Caco-2 (cell line): ENCODE measurements at regions of chr3 and their contacts with region 1.

Region 1: GRCh38 chr3:123328851-123329635 is 119.8 kb downstream of the ADCY5 start:
- DNase-seq: peak; percentile 65 to 85
- H3K4me3 ChIP-seq: no peak overlapping the region
- H3K4me3 Mint-ChIP-seq: no peak overlapping the region
- H3K27ac Mint-ChIP-seq: no peak overlapping the region
- H3K4me1 ChIP-seq: no peaks in the 10 kb centered on the region; the same call in 1 of the 2 replicates
- H3K4me1 Mint-ChIP-seq: no peaks in the 10 kb centered on the region
- H3K27me3 ChIP-seq: no peaks in the 10 kb centered on the region
- H3K27me3 Mint-ChIP-seq: peaks cover 3% of the 10 kb centered on the region
- CTCF ChIP-seq: peak; percentile 84 to 88

Region 2: DNA sequence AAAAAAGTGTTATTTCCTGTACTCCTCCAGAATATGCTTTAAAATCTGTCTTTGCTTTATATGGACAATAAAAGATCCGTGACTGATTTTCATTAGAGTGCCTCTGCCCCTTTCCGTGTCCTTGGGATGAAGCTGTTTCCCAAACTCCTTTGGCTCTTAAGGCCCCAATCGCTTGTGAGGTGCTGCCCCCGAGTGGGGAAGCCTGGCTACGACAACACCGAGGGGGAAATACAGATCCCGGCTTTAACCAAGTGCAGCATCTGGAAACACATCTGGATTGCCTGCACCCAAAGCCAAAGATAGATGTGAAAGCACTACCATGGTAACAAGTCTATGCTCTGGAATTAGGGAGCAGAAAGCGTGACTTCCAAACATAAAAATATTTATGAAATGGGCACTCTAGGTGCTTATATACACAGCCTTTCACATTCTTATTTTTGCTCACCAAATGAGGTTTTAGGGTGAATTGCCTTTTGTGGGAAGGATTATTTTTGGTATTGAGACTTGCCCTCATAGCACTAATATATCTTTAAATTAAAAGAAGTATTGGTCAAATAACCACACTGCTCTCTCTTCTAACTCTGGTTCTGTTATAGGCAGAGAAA is 160.5 kb after region 1 on chr3:
- CTCF ChIA-PET with region 1: interaction called, 10 read pairs
- POLR2A ChIA-PET with region 1: no interaction called
- intact Hi-C with region 1: loop called (anchors 1 kb)
- DNase-seq: peak; percentile 58 to 81
- H3K4me3 ChIP-seq: no peak overlapping the region
- H3K4me3 Mint-ChIP-seq: no peak overlapping the region
- H3K27ac Mint-ChIP-seq: no peak overlapping the region
- H3K4me1 ChIP-seq: no peaks in the 10 kb centered on the region
- H3K4me1 Mint-ChIP-seq: no peaks in the 10 kb centered on the region
- H3K27me3 ChIP-seq: no peaks in the 10 kb centered on the region
- H3K27me3 Mint-ChIP-seq: no peaks in the 10 kb centered on the region
- CTCF ChIP-seq: peak; percentile 82 to 90

Region 3: DNA sequence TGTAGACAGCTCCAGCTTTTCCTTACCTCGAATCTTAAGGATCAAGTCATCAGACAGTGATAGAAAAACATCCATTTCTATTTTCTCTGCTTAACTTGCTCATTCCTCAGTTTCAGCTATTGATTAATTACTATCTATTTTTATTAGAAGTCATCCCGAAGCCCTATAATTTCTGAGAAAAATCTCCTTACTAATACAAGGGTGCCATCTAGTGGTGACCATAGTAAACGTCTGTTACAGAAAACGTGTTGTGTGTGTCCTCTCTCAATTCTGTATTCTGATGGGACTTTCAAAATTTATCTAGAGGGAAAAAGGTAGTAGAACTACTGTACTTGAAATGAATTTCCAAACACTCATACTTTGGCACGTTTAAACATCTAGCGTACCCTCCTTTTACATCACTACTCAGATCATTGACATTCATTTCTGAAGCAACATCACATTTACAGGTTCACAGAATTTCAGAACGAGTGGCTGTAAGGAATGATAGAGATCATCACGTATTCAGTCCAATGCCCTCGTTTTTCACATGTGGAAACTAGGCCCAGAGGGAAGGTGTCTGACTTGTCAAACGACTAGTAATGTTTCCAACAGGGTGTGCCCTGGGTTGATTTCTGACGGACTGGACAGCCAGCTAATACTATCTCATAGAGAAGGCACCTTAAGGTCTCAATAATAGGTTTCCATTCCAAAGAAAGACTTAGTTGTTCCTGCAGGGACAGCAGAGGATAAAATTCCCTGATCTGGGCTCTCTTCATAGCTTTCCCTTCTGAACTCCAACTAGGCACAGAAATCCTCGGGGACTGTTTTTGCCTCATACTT is 230.2 kb after region 1 on chr3:
- CTCF ChIA-PET with region 1: no interaction called
- POLR2A ChIA-PET with region 1: no interaction called
- intact Hi-C with region 1: loop called (anchors 1 kb)
- DNase-seq: peak in 1 of 2 experiments; percentile 21
- H3K4me3 ChIP-seq: no peak overlapping the region
- H3K4me3 Mint-ChIP-seq: no peak overlapping the region
- H3K27ac Mint-ChIP-seq: no peak overlapping the region
- H3K4me1 ChIP-seq: no peaks in the 10 kb centered on the region
- H3K4me1 Mint-ChIP-seq: peaks cover 5% of the 10 kb centered on the region
- H3K27me3 ChIP-seq: no peaks in the 10 kb centered on the region
- H3K27me3 Mint-ChIP-seq: no peaks in the 10 kb centered on the region
- CTCF ChIP-seq: peak; percentile 53 to 71

Region 4: GRCh38 chr3:124202754-124203153 is 873.7 kb after region 1 on chr3:
- CTCF ChIA-PET with region 1: no interaction called
- POLR2A ChIA-PET with region 1: no interaction called
- intact Hi-C with region 1: no loop called
- DNase-seq: no peak
- H3K4me3 ChIP-seq: no peak overlapping the region
- H3K4me3 Mint-ChIP-seq: no peak overlapping the region
- H3K27ac Mint-ChIP-seq: no peak overlapping the region
- H3K4me1 ChIP-seq: no peaks in the 10 kb centered on the region
- H3K4me1 Mint-ChIP-seq: no peaks in the 10 kb centered on the region
- H3K27me3 ChIP-seq: no peaks in the 10 kb centered on the region; the same call in 1 of the 2 replicates
- H3K27me3 Mint-ChIP-seq: peaks cover 28% of the 10 kb centered on the region
- CTCF ChIP-seq: no peak